Naive thymus-derived CD4-positive, alpha-beta T cell (primary cell): ENCODE measurements at regions of chr4 and their contacts with region 1.

Region 1: DNA sequence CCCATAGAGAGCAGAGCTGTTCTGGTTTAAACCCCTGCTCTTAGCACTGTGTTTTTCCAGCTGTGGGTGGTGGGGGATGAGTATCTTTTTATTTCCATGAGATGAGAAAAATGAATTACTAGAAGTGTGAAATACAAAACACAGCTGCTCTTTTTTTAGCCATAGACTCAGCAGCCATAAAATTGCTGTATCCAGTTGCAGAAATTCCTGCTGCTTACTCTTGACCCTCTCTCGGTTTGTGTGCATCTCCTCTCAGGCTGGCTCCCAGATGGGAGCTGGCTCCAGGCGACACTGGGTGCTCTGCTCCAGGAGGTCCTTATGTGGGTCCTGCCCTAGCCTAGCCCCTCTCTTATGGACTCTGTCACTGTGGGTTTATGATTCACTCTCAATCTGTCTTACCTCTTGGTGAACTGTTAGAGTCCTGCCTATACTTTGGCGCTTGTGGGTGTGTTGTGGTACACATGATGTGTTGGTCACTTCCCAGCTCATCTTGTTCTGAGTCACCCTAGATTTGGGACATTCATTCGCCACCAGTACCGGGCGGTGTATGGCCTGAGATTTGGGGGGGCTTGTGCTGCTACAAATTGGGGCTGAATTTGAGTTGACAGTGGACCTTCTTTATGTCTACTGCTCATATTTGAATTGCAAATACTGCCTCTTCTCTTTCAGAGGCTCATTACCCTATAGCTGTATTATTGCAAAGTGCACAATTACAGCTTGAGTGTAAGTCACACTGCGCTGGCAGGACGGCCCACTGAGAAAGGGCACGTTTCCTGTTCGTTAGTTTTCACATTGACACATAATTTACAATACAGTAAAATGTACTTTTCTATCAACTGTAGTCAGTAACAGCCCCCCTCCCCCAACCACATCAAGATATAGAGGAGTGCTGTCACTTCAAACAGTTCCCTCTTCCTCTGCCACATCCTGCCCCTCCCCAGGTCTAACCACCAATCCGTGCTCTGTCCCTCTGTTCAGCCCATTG is 46.9 kb upstream of the MSANTD1 start:
- DNase-seq: peak; percentile 25 to 93 (median 88)
- ATAC-seq: peak; percentile 96
- H3K4me3 ChIP-seq: peak overlapping the region; percentile 34
- H3K4me3 Mint-ChIP-seq: peak overlapping the region; percentile 73 to 88 (median 82)
- H3K27ac ChIP-seq: peak overlapping the region; percentile 29
- H3K27ac Mint-ChIP-seq: peak overlapping the region; percentile 55 to 94 (median 84)
- H3K4me1 ChIP-seq: peaks cover 40% of the 10 kb centered on the region in 2 donors
- H3K4me1 Mint-ChIP-seq: peaks cover 31 to 73% (median 57%) of the 10 kb centered on the region in 7 donors
- H3K27me3 ChIP-seq: no peaks in the 10 kb centered on the region
- H3K27me3 Mint-ChIP-seq: no peaks in the 10 kb centered on the region

Region 2: GRCh38 chr4:3047464-3048286 is 154.3 kb before region 1 on chr4:
- CTCF ChIA-PET with region 1: no interaction called
- POLR2A ChIA-PET with region 1: no interaction called
- intact Hi-C with region 1: loop called in 1 of 2 experiments (anchors 2 kb)
- DNase-seq: peak; percentile 40 to 75 (median 58)
- ATAC-seq: peak; percentile 79
- H3K4me3 ChIP-seq: peak overlapping the region; percentile 65
- H3K4me3 Mint-ChIP-seq: peak overlapping the region; percentile 62 to 92 (median 83)
- H3K27ac ChIP-seq: peak overlapping the region; percentile 61
- H3K27ac Mint-ChIP-seq: peak overlapping the region; percentile 79 to 90 (median 84)
- H3K4me1 ChIP-seq: peaks cover 16 to 18% of the 10 kb centered on the region in 2 donors
- H3K4me1 Mint-ChIP-seq: peaks cover 17 to 45% (median 35%) of the 10 kb centered on the region in 7 donors
- H3K27me3 ChIP-seq: no peaks in the 10 kb centered on the region
- H3K27me3 Mint-ChIP-seq: peaks cover 0 to 17% (median 0%) of the 10 kb centered on the region in 5 donors

Region 3: GRCh38 chr4:3215733-3216132 is 13.7 kb after region 1 on chr4:
- CTCF ChIA-PET with region 1: interaction called, 3 read pairs
- POLR2A ChIA-PET with region 1: interaction called, 4 read pairs
- intact Hi-C with region 1: loop called in 1 of 2 experiments (anchors 2 kb)
- DNase-seq: no peak
- ATAC-seq: no peak
- H3K4me3 ChIP-seq: no peak overlapping the region
- H3K4me3 Mint-ChIP-seq: no peak overlapping the region
- H3K27ac ChIP-seq: no peak overlapping the region
- H3K27ac Mint-ChIP-seq: no peak overlapping the region
- H3K4me1 ChIP-seq: peaks cover 0 to 10% of the 10 kb centered on the region in 2 donors
- H3K4me1 Mint-ChIP-seq: peaks cover 0 to 7% (median 0%) of the 10 kb centered on the region in 7 donors
- H3K27me3 ChIP-seq: no peaks in the 10 kb centered on the region
- H3K27me3 Mint-ChIP-seq: no peaks in the 10 kb centered on the region

Region 4: GRCh38 chr4:3292571-3293400 is 90.8 kb after region 1 on chr4 and contains the start of gene RGS12:
- CTCF ChIA-PET with region 1: no interaction called
- POLR2A ChIA-PET with region 1: interaction called, 4 read pairs
- intact Hi-C with region 1: loop called (anchors 1 to 5 kb)
- DNase-seq: peak; percentile 65 to 91 (median 75)
- ATAC-seq: peak; percentile 91
- H3K4me3 ChIP-seq: peak within 1 kb of the TSS; percentile 79
- H3K4me3 Mint-ChIP-seq: peak within 1 kb of the TSS; percentile 86 to 98 (median 92)
- H3K27ac ChIP-seq: peak within 1 kb of the TSS; percentile 69
- H3K27ac Mint-ChIP-seq: peak within 1 kb of the TSS; percentile 68 to 93 (median 82)
- H3K4me1 ChIP-seq: peaks cover 5 to 8% of the 10 kb centered on the region in 2 donors
- H3K4me1 Mint-ChIP-seq: peaks cover 12 to 37% (median 33%) of the 10 kb centered on the region in 7 donors
- H3K27me3 ChIP-seq: no peaks in the 10 kb centered on the region
- H3K27me3 Mint-ChIP-seq: peaks cover 0 to 67% (median 0%) of the 10 kb centered on the region in 5 donors
- total RNA-seq, gene RGS12: 2.5 to 13.3 (median 7.5) TPM

Region 5: DNA sequence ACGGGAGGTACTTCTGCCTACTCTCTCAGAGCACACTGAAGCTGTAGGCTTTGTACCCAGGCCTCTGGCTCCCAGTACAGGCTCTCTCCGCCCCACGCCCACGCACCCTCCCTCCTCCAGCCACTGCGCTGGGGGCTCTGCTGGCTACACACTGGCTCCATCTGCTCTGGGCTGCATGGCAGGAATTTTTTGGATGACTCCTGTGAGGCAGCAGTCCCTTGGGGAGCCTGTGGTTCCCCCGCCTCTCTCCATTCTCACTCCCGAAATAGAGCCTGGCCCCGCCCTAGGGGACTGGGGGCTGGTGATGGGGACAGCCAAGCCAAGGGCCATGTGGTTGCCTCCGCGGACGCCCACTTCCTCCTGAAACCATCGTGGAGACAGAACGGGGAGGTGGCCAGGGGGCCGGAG is 506.1 kb after region 1 on chr4:
- CTCF ChIA-PET with region 1: no interaction called
- POLR2A ChIA-PET with region 1: no interaction called
- intact Hi-C with region 1: no loop called
- DNase-seq: no peak
- ATAC-seq: no peak
- H3K4me3 ChIP-seq: no peak overlapping the region
- H3K4me3 Mint-ChIP-seq: no peak overlapping the region
- H3K27ac ChIP-seq: no peak overlapping the region
- H3K27ac Mint-ChIP-seq: no peak overlapping the region
- H3K4me1 ChIP-seq: no peaks in the 10 kb centered on the region
- H3K4me1 Mint-ChIP-seq: no peaks in the 10 kb centered on the region
- H3K27me3 ChIP-seq: no peaks in the 10 kb centered on the region
- H3K27me3 Mint-ChIP-seq: peaks cover 2 to 17% (median 12%) of the 10 kb centered on the region in 5 donors

Region 6: GRCh38 chr4:3880615-3881120 is 678.7 kb after region 1 on chr4:
- CTCF ChIA-PET with region 1: no interaction called
- POLR2A ChIA-PET with region 1: no interaction called
- intact Hi-C with region 1: loop called in 1 of 2 experiments (anchors 5 kb)
- DNase-seq: peak; percentile 12 to 66 (median 55)
- ATAC-seq: peak; percentile 80
- H3K4me3 ChIP-seq: peak overlapping the region; percentile 35
- H3K4me3 Mint-ChIP-seq: peak overlapping the region in 5 of 10 donors; percentile 44 to 74 (median 62)
- H3K27ac ChIP-seq: no peak overlapping the region
- H3K27ac Mint-ChIP-seq: no peak overlapping the region
- H3K4me1 ChIP-seq: peaks cover 10 to 12% of the 10 kb centered on the region in 2 donors
- H3K4me1 Mint-ChIP-seq: peaks cover 9 to 17% (median 15%) of the 10 kb centered on the region in 7 donors
- H3K27me3 ChIP-seq: peaks cover 0 to 4% of the 10 kb centered on the region in 2 donors
- H3K27me3 Mint-ChIP-seq: peaks cover 36 to 52% (median 49%) of the 10 kb centered on the region in 5 donors

Region 7: GRCh38 chr4:3945511-3946290 is 743.7 kb after region 1 on chr4:
- CTCF ChIA-PET with region 1: no interaction called
- POLR2A ChIA-PET with region 1: no interaction called
- intact Hi-C with region 1: loop called in 1 of 2 experiments (anchors 10 kb)
- DNase-seq: no peak
- ATAC-seq: no peak
- H3K4me3 ChIP-seq: no peak overlapping the region
- H3K4me3 Mint-ChIP-seq: no peak overlapping the region
- H3K27ac ChIP-seq: no peak overlapping the region
- H3K27ac Mint-ChIP-seq: no peak overlapping the region
- H3K4me1 ChIP-seq: no peaks in the 10 kb centered on the region
- H3K4me1 Mint-ChIP-seq: peaks cover 4 to 13% (median 11%) of the 10 kb centered on the region in 7 donors
- H3K27me3 ChIP-seq: no peaks in the 10 kb centered on the region
- H3K27me3 Mint-ChIP-seq: peaks cover 0 to 10% (median 0%) of the 10 kb centered on the region in 5 donors